ENCODE measurements at regions of chr17 and their contacts with region 1.

Region 1: DNA sequence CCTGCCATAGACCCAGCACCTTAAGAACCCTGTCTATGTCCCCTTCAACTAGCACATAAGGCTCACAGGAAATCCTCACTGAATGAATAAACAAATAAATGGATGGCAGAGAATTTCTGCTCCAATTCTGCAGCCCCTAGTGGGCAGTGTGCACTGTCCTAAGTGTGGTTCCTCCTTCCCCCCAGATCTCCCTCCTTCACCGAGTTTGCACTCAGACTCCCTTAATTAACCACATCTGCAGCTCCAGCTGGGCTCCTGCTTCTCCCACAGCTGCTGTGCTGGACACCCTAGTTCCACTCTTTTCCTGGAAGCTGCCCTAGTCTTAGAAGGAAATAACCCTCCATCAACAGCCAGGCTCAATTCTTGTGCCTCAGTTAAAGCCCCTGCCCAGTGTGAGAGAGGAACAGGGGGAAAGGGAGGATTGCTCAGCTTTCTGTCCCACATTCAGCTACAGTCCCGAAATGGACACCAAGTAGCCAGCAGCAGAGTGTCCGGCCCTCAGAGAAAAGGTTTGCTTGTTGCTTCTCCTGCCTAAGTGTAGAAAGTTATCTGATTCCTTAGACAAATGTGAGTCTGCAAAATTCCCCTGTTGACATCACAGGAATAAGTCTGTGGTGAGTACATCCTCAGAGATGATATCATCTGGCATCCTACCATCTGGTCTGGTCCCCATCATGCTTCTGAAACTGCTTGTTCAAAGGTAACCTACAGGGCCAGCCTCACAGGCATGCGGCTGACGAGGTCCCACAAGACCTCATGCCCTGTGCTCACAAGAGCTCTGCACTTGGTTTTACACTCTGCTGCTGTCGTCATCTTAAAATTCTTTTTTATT is 12.3 kb downstream of the LRRC3C start:
- DNase-seq: peak; percentile 76
- ATAC-seq: peak; percentile 99
- H3K4me3 Mint-ChIP-seq: no peak overlapping the region
- H3K27ac Mint-ChIP-seq: peak overlapping the region; percentile 79
- H3K4me1 Mint-ChIP-seq: peaks cover 18% of the 10 kb centered on the region
- H3K27me3 Mint-ChIP-seq: no peaks in the 10 kb centered on the region

Region 2: DNA sequence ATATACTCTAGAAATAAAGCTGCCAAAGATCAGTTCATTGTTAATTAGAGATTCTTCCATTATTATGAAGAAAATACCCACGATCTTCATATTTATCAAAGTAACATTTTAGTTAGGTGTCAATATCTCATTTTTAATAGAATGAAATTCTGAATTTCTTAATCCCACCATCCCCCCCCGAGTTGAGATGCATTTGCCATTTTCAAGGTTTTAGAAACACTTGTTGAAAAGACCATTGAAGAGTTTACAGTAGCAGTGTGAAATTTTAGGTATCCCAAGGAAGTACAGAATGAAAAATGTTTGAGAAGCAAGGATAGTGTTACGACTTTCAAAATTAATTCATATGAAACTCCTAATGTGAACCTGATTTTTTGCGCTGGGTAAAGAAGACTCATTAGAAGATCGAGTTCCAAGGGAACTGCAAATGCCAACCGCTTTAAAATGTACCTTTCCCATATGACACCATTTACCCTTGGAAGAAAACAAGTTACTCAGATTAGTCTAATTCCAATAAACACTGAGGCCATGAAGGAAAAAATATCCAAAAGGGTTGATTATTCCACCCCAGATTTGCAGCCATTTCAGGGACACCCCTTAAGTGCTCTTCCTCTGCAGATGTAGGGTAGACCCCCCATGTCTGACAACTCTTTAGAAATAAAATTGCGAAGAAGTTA is 76.4 kb before region 1 on chr17:
- CTCF ChIA-PET with region 1: no interaction called
- POLR2A ChIA-PET with region 1: no interaction called
- intact Hi-C with region 1: no loop called
- DNase-seq: no peak
- ATAC-seq: no peak
- H3K4me3 Mint-ChIP-seq: peak overlapping the region; percentile 98
- H3K27ac Mint-ChIP-seq: peak overlapping the region; percentile 97
- H3K4me1 Mint-ChIP-seq: peaks cover 61% of the 10 kb centered on the region
- H3K27me3 Mint-ChIP-seq: no peaks in the 10 kb centered on the region

Region 3: DNA sequence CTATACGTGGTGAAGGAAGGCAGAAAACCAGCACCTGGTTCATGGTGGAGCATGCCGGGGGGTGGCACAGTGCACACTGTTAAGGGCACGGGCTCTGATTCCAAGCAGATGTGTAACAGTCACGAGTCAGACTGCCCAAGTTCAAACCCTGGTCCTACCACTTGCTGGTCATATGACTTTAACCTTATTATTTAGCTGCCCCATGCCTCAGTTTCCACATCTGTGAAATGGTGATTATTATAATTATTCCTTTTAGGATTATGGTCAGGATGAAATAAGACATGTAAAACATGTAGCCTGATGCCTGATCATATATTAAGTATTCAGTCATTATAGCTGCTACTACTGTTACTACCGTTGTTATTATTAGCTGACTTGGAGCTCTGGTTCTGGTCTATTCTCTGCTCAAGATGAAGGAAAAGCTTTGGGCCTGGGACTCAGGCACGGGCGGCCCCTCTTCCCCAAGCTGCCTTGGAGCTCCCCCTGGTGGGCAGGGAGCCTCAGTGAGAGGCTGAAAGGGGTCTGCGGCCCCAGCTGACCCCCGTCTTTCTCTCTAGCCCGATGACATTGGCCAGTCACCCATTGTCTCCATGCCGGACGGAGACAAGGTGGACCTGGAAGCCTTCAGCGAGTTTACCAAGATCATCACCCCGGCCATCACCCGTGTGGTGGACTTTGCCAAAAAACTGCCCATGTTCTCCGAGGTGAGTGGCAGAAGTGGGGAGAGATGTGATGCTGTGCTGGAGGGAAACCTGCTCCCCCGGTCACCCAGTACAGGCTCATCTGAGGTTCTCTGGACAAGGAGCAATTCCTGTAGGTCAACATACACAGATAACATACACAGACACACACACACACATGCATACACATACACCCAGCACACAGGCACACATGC is 146.6 kb after region 1 on chr17:
- CTCF ChIA-PET with region 1: no interaction called
- POLR2A ChIA-PET with region 1: no interaction called
- intact Hi-C with region 1: no loop called
- DNase-seq: peak; percentile 81
- ATAC-seq: peak; percentile 78
- H3K4me3 Mint-ChIP-seq: no peak overlapping the region
- H3K27ac Mint-ChIP-seq: no peak overlapping the region
- H3K4me1 Mint-ChIP-seq: peaks cover 5% of the 10 kb centered on the region
- H3K27me3 Mint-ChIP-seq: no peaks in the 10 kb centered on the region

Region 4: DNA sequence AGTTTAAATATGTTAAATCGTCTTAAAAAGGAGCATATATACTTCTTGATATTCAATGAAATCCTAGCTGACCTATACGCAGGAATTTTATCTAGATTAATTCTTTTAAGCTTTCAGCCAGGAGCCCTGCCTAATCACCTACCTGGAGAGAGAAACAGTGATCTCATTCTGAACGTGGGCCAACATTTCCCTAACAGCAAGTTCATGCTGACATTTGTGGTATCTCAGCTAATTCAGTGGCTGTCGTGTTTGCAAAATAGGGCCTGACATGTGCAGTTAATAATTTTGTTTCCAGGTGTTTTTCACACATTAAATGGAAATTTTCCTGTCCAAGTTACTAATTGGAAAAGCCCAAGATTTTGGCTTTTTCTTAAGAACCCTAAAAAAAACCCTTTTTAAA is 746.4 kb after region 1 on chr17:
- CTCF ChIA-PET with region 1: no interaction called
- POLR2A ChIA-PET with region 1: no interaction called
- intact Hi-C with region 1: loop called in 1 of 2 experiments (anchors 5 kb)
- DNase-seq: no peak
- ATAC-seq: no peak
- H3K4me3 Mint-ChIP-seq: no peak overlapping the region
- H3K27ac Mint-ChIP-seq: no peak overlapping the region
- H3K4me1 Mint-ChIP-seq: no peaks in the 10 kb centered on the region
- H3K27me3 Mint-ChIP-seq: peaks cover 8% of the 10 kb centered on the region

Measured in activated CD4-positive, alpha-beta T cell treated with anti-CD3 and anti-CD28 coated beads for 36 hours (primary cell).